Motor neuron (in vitro differentiated cells): ENCODE measurements at regions of chr4 and their contacts with region 1.

Region 1: GRCh38 chr4:6269616-6270511 is at the start of gene WFS1:
- ATAC-seq: peak; percentile 92 to 100 (median 99)
- H3K4me3 ChIP-seq: peak within 1 kb of the TSS; percentile 65 to 84 (median 74)
- H3K27ac ChIP-seq: no peak within 1 kb of the TSS
- H3K4me1 ChIP-seq: peaks cover 7 to 16% of the 10 kb centered on the region in 2 donors
- total RNA-seq, gene WFS1: 5.2 to 23.7 (median 8.7) TPM

Region 2: DNA sequence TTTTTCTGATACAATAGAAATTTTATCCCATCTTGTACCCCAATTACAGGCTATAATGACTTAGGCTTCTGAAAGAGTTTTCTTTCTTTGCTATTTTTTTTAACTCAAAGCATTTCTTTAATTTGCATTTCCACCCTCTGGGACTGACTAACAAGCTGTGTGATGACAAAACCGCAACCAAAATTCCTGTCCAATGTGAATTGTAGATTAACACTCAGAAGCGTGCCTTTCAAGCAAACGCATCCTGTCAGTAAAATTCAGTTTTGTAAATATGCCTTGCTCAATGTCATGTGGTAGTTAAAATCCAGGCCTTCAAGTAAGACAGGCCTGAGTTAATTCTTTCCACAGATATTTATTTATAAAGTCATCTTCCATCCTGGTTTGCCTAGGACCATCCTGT is 1168.3 kb before region 1 on chr4:
- in situ Hi-C with region 1: no loop called
- ATAC-seq: peak in 3 of 8 experiments; percentile 79 to 98 (median 98)
- H3K4me3 ChIP-seq: no peak overlapping the region
- H3K27ac ChIP-seq: no peak overlapping the region
- H3K4me1 ChIP-seq: no peaks in the 10 kb centered on the region

Region 3: GRCh38 chr4:6546681-6547447 is 277.0 kb after region 1 on chr4:
- in situ Hi-C with region 1: loop called in 3 of 9 experiments (anchors 25 kb)
- ATAC-seq: peak; percentile 71 to 88 (median 79)
- H3K4me3 ChIP-seq: no peak overlapping the region
- H3K27ac ChIP-seq: no peak overlapping the region
- H3K4me1 ChIP-seq: no peaks in the 10 kb centered on the region

Region 4: DNA sequence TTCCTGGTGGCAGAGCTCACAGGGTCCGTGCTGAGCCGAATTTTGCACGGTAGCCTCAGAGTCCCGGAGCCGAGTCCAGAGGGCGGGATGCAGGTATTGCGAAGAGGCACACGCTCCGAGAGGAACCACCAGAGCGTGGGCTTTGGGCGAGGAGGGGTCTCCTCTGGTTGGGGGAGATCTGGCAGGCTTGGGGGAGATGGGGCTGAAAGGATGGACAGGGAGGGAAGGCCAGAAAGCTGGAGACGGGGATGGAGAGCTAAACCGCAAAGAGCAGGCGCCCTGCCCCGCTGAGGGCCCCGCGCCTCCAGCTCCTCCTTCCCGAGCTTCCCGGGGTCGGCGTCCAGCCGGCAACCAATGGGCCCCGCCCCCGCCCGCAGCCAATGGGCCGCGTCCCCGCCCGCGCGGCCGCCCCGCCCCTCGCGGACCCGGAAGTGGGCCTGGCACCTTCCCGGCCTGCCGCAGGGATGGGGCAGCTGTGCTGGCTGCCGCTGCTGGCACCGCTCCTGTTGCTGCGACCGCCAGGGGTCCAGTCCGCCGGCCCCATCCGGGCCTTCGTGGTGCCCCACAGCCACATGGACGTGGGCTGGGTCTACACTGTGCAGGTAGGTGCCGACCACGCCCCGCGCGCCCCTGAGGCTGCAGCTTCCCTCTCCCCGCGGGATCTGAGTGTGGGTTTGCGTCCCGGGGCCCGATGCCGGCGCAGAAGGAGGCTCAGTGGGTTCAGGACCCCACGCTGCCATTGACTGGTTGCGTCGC is 305.1 kb after region 1 on chr4 and contains the start of gene MAN2B2:
- in situ Hi-C with region 1: loop called in 2 of 9 experiments (anchors 25 kb)
- ATAC-seq: peak; percentile 93 to 96 (median 94)
- H3K4me3 ChIP-seq: peak within 1 kb of the TSS; percentile 49 to 76 (median 66)
- H3K27ac ChIP-seq: no peak within 1 kb of the TSS
- H3K4me1 ChIP-seq: peaks cover 0 to 4% of the 10 kb centered on the region in 2 donors
- total RNA-seq, gene MAN2B2: 4.0 to 36.3 (median 12.2) TPM

Region 5: GRCh38 chr4:7134737-7135388 is 865.0 kb after region 1 on chr4:
- in situ Hi-C with region 1: no loop called
- ATAC-seq: peak in 3 of 8 experiments; percentile 66 to 88 (median 76)
- H3K4me3 ChIP-seq: no peak overlapping the region
- H3K27ac ChIP-seq: no peak overlapping the region
- H3K4me1 ChIP-seq: peaks cover 8 to 12% of the 10 kb centered on the region in 2 donors